WTC11 (cell line): ENCODE measurements at regions of chr22 and their contacts with region 1.

Region 1: DNA sequence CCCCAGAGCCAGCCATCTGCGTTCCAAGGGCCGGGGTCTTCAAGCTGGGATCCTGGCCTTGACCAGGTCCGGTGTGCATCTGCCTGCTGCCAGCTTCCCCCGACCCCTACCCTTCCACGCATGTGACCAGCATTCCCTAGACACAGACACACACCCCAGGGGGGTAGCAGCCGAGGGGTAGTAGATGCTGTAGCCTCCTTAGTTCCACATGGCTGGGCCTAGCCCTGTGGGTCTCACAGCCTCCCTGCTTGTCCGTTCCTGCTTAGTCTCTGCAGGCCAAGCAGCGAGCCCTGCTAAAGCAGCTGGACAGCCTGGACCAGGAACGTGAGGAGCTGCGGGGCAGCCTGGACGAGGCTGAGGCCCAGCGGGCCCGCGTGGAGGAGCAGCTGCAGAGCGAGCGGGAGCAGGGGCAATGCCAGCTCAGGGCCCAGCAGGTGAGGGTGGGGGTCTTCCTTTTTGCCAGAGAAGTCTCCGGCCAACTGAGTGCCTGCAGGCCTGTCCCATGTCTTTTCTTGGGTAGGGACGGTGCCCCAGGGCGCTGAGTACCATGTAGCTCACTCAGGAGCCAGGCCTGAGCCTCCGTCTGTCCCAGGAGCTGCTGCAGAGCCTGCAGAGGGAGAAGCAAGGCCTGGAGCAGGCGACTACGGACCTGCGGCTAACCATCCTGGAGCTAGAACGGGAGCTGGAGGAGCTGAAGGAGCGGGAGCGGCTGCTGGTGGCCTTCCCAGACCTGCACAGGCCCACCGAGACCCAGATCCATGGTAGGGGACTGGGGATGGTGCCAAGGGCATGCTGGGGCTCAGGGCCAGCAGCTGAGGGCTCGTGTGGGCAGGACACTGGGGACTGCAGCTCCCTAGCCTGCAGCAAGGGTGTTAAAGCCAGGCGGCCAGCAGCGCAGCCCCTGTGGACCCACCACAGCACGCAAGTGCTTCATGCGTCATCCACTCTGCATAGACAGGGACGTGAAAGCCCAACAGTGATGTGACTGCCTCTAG is 13.6 kb downstream of the RNF215 start:
- DNase-seq: no peak
- ATAC-seq: no peak
- H3K4me3 Mint-ChIP-seq: no peak overlapping the region
- H3K27ac Mint-ChIP-seq: no peak overlapping the region
- H3K4me1 Mint-ChIP-seq: 0 out of 2 replicates have a peak, but pooled peaks cover 3% of the 10 kb centered on the region
- H3K27me3 Mint-ChIP-seq: no peaks in the 10 kb centered on the region
- CTCF ChIP-seq: no peak

Region 2: DNA sequence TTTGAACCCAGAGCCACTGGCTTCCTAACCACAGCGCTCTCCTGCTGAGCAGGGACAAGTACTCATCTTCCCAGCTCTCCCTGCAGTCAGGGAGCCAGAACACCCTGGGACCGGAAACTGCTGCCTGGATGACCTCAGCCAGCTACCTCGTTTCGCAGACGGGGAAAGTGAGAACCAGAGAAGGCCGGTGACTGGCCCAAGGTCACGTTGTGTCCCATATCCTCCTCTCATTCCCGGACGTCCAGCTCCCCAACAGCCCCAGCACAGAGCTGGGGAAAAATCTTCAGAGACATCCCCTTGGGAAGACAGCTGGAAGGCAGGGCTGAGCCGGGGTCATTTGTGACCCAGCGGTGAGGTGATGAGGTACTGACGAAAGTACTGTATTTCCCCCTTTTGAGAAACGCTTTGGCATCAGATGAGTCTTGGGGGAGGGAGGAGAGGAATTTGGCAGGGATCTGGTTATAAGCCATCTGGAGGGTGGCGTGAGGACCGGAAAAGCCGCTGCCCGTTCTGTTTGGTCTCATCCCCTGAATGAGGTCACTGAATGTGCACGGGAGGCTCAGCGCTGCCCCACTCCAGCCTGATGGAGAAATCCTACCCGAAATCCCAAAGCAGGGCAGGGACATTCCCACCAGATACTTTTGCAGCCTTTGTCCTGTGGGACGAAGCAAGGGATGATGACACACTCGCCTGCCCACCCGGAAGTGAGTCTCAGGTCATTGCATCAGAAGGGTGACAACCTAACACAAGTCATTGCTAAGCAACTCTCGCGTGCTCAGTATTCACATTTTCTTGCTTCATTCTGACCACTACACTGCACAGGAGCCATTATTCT is 168.1 kb before region 1 on chr22:
- CTCF ChIA-PET with region 1: no interaction called
- POLR2A ChIA-PET with region 1: no interaction called
- DNase-seq: no peak
- ATAC-seq: no peak
- H3K4me3 Mint-ChIP-seq: no peak overlapping the region
- H3K27ac Mint-ChIP-seq: no peak overlapping the region
- H3K4me1 Mint-ChIP-seq: peaks cover 13% of the 10 kb centered on the region
- H3K27me3 Mint-ChIP-seq: no peaks in the 10 kb centered on the region
- CTCF ChIP-seq: no peak

Region 3: DNA sequence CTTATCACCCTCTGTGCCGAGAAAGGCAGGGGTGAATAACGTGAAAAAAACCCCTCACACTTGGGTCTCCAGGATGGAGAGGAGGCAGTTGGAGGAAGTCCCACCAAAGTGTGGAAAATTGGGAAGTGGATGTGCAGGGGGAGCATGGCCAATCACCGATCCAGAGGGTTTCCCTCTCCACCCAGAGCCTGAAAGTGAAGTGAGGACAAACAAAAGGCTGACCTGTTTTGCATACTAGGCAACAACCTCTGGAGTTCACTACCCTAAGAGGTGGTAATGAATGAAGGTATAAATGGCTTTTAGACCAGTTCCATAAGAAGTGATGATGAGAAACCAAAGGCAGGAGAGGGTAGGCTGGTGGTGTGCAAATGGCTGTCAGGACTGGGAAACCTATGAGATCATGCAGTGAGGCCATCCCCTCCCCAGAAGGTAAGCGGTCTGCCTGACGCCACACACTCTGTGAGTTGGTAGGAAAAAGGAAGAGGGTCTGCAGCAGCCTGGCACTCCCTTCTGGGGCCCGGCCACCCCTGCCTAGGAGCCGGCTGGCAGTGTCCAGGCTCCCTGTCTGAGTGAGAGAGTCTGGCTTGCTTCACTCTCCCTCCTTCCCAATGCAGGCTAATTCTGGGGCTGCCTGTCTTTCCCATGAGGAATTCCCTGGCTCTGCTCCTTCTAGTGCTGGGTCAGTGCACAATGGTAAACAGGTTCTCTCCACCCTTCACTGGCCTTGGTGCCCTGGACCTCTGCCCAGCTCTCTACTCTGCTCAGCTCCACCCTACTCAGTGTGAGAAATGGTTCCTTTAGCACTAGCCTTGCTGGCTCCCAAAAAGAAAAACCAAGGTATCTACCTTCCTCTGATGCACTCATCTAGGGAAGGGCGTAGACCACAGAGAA is 62.5 kb before region 1 on chr22:
- CTCF ChIA-PET with region 1: no interaction called
- POLR2A ChIA-PET with region 1: no interaction called
- DNase-seq: no peak
- ATAC-seq: no peak; the same call in 1 of the 2 replicates
- H3K4me3 Mint-ChIP-seq: no peak overlapping the region
- H3K27ac Mint-ChIP-seq: no peak overlapping the region
- H3K4me1 Mint-ChIP-seq: peaks cover 10% of the 10 kb centered on the region
- H3K27me3 Mint-ChIP-seq: no peaks in the 10 kb centered on the region
- CTCF ChIP-seq: no peak

Region 4: DNA sequence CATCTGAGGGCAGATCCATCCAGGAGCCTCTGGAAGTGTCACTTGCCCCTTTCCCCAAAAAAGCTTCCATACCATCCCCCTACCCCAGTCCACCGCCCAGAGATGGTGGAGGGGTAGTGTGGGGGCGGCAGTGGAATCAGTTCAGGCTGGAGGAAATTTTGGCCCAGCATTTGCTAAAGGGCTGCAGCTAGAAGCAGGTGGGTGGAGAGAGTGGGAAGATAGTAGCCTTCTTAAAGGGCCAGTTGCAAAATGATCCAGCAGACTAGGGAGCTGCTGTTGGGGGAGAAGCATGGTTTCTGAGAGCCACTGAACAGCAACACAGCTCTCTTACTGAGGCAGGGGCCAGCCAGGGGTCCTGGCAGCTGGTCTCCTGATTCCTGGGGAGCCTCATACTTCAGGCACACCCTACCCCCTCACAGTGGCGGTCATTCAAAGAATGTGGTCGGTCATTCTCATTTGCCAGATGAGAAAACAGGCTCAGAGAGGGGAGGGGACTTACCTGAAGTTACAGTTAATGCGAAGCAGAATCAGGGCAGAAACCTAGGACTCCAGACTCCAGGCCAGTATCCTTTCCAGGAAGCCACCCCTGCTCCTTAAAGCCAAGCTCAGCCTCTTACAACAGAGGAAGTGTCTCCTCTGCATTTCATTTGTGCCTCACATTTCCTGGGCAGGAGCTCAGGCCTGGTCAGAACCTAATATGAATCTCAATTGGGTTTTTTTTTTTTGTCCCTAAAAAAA is 28.6 kb after region 1 on chr22:
- CTCF ChIA-PET with region 1: no interaction called
- POLR2A ChIA-PET with region 1: no interaction called
- DNase-seq: no peak
- ATAC-seq: peak; percentile 55
- H3K4me3 Mint-ChIP-seq: no peak overlapping the region
- H3K27ac Mint-ChIP-seq: peak overlapping the region; percentile 68
- H3K4me1 Mint-ChIP-seq: peaks cover 23% of the 10 kb centered on the region
- H3K27me3 Mint-ChIP-seq: peaks cover 46% of the 10 kb centered on the region
- CTCF ChIP-seq: no peak

Region 5: GRCh38 chr22:30435674-30436126 is 62.1 kb after region 1 on chr22:
- CTCF ChIA-PET with region 1: no interaction called
- POLR2A ChIA-PET with region 1: no interaction called
- DNase-seq: no peak
- ATAC-seq: no peak; the same call in 1 of the 2 replicates
- H3K4me3 Mint-ChIP-seq: no peak overlapping the region
- H3K27ac Mint-ChIP-seq: no peak overlapping the region
- H3K4me1 Mint-ChIP-seq: peaks cover 9% of the 10 kb centered on the region
- H3K27me3 Mint-ChIP-seq: peaks cover 21% of the 10 kb centered on the region
- CTCF ChIP-seq: no peak

Region 6: DNA sequence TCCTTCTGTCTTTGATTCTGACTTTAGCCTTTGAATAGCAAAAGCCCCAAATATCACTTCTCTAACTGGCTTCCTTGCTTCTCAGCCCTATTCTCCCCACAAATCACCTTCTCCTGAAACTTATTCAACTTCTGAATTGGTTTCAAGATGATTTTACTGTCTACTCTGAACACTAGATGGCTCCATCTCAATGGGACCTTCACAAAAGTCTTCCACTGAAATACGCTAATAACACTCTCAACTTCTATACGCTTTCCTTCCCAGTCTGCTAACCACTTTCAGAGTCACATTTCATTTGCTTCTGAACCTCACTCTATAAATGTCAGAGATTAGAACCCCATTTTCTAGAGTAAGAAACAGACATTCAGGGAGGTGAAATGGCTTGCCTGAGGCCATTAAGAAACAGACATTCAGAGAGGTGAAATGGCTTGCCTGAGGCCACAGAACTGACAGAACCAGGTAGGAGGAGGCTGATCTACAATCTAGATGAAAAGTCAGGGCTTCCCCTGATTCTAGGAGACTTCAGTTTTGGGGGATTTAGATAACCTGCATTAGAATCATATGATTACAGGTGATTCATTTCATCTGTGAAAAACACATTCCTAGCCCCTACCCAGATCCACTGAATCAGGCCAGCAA is 574.3 kb after region 1 on chr22:
- CTCF ChIA-PET with region 1: no interaction called
- POLR2A ChIA-PET with region 1: interaction called, 14 read pairs
- DNase-seq: no peak
- ATAC-seq: no peak
- H3K4me3 Mint-ChIP-seq: no peak overlapping the region
- H3K27ac Mint-ChIP-seq: no peak overlapping the region
- H3K4me1 Mint-ChIP-seq: no peaks in the 10 kb centered on the region
- H3K27me3 Mint-ChIP-seq: no peaks in the 10 kb centered on the region
- CTCF ChIP-seq: no peak